ENCODE measurements at regions of chr3 and their contacts with region 1.

Region 1: GRCh38 chr3:12984023-12984823 is 89.0 kb downstream of the IQSEC1 start:
- DNase-seq: peak; percentile 73
- H3K4me3 Mint-ChIP-seq: no peak overlapping the region
- H3K27ac Mint-ChIP-seq: no peak overlapping the region
- H3K4me1 Mint-ChIP-seq: peaks cover 54% of the 10 kb centered on the region
- H3K27me3 Mint-ChIP-seq: no peaks in the 10 kb centered on the region

Region 2: DNA sequence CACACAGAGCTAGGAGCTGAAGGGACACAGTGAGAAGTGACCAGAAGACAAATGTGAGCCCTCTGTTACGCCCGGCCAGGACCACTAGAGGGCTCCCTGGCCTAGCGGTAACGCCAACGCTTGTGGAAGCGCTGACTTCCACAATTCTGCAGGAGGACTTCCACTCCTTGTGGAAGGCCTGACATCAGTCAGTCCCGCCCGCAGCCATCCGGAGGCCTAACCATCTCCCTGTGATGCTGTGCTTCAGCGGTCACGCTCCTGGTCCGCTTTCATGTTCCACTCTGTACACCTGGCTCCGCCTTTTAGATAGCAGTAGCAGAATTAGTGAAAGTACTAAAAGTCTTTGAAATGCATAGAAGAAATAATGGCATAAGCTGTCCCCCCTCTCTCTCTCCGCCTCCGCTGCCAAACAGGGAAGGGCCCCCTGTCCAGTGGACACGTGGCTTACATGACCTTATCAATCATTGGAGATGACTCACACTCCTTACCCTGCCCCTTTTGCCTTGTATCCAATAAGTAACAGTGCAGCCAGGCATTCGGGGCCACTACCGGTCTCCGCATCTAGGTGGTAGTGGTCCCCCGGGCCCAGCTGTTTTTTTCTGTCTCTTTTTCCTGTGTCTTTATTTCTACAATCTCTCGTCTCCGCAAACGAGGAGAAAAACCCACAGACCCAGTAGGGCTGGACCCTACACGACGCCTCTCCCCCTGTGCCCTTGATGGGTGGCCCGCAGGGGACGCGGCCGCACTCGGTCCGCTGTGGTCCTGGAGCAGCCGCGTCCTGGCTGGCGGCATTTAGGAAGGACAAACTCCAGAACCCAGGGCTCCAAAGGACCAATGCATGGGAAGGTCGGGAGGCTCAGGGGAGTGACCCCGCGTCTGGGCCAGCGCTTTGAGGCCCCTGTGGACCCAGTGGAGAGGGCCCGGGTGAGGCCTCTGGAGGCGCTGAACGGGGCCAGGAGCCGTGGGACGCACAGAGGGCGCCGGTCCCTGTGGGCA is 115.9 kb before region 1 on chr3:
- CTCF ChIA-PET with region 1: interaction called, 8 read pairs
- POLR2A ChIA-PET with region 1: no interaction called
- intact Hi-C with region 1: loop called (anchors 2 kb)
- DNase-seq: peak; percentile 78
- H3K4me3 Mint-ChIP-seq: peak overlapping the region; percentile 72
- H3K27ac Mint-ChIP-seq: no peak overlapping the region
- H3K4me1 Mint-ChIP-seq: peaks cover 13% of the 10 kb centered on the region
- H3K27me3 Mint-ChIP-seq: peaks cover 19% of the 10 kb centered on the region

Region 3: GRCh38 chr3:12930964-12931905 is 53.0 kb before region 1 on chr3:
- CTCF ChIA-PET with region 1: interaction called, 24 read pairs
- POLR2A ChIA-PET with region 1: no interaction called
- intact Hi-C with region 1: no loop called
- DNase-seq: no peak
- H3K4me3 Mint-ChIP-seq: no peak overlapping the region
- H3K27ac Mint-ChIP-seq: no peak overlapping the region
- H3K4me1 Mint-ChIP-seq: peaks cover 8% of the 10 kb centered on the region
- H3K27me3 Mint-ChIP-seq: no peaks in the 10 kb centered on the region

Region 4: GRCh38 chr3:12967606-12968351 is 16.4 kb before region 1 on chr3:
- CTCF ChIA-PET with region 1: interaction called, 53 read pairs
- POLR2A ChIA-PET with region 1: no interaction called
- intact Hi-C with region 1: no loop called
- DNase-seq: peak; percentile 93
- H3K4me3 Mint-ChIP-seq: peak overlapping the region; percentile 71
- H3K27ac Mint-ChIP-seq: peak overlapping the region; percentile 67
- H3K4me1 Mint-ChIP-seq: peaks cover 58% of the 10 kb centered on the region
- H3K27me3 Mint-ChIP-seq: no peaks in the 10 kb centered on the region

Region 5: GRCh38 chr3:12994607-12995388 is 10.6 kb after region 1 on chr3:
- CTCF ChIA-PET with region 1: interaction called, 51 read pairs
- POLR2A ChIA-PET with region 1: interaction called, 8 read pairs
- intact Hi-C with region 1: no loop called
- DNase-seq: peak; percentile 92
- H3K4me3 Mint-ChIP-seq: peak overlapping the region; percentile 85
- H3K27ac Mint-ChIP-seq: peak overlapping the region; percentile 71
- H3K4me1 Mint-ChIP-seq: peaks cover 54% of the 10 kb centered on the region
- H3K27me3 Mint-ChIP-seq: no peaks in the 10 kb centered on the region